Naive thymus-derived CD8-positive, alpha-beta T cell (primary cell): ENCODE measurements at regions of chr11 and their contacts with region 1.

Region 1: GRCh38 chr11:62787005-62787759 is at the start of gene TMEM179B:
- DNase-seq: peak; percentile 90 to 99 (median 97)
- ATAC-seq: peak; percentile 69 to 73
- H3K4me3 Mint-ChIP-seq: peak within 1 kb of the TSS; percentile 90 to 96 (median 96)
- H3K27ac Mint-ChIP-seq: peak within 1 kb of the TSS; percentile 92 to 98 (median 96)
- H3K4me1 Mint-ChIP-seq: peaks cover 14 to 53% (median 46%) of the 10 kb centered on the region in 4 donors
- H3K27me3 Mint-ChIP-seq: no peaks in the 10 kb centered on the region
- polyA plus RNA-seq, gene TMEM179B: 109 to 126 (median 122) TPM

Region 2: DNA sequence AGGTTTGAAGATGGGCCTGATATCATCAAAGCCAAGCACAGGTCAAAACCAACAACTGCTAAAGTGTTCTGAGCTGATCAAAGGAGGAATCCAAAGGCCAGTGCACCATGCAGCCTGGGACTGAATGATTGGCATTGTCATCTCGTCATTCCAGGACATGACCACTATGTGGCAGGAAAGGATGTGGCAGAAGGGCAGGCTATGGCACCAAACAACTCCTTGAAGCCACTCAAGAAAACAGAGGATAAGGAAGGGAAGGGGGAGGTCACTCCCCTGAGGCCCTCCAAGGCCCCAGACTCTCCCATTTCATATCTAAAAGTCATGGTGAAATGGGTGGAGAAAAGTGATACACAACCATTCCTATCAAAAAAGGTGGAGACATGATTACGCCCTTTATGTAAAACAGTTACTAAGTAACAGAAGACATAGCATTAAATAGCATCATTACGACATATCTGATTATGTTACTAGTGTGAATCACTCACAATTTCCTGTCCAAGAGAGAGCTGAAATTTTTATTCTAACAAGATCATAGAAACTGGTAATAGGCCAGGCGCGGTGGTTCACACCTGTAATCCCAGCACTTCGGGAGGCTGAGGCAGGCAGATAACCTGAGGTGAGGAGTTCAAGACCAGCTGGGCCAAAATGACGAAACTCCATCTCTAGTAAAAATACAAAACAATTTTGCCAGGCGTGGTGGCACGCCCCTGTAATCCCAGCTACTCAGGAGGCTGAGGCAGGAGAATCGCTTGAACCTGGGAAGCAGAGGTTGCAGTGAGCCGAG is 289.9 kb before region 1 on chr11:
- POLR2A ChIA-PET with region 1: no interaction called
- DNase-seq: peak in 2 of 10 donors; percentile 8 to 9
- ATAC-seq: peak; percentile 20 to 52
- H3K4me3 Mint-ChIP-seq: no peak overlapping the region
- H3K27ac Mint-ChIP-seq: peak overlapping the region in 2 of 10 donors; percentile 3 to 14
- H3K4me1 Mint-ChIP-seq: peaks cover 0 to 11% (median 1%) of the 10 kb centered on the region in 4 donors
- H3K27me3 Mint-ChIP-seq: peaks cover under 1 to 9% (median 7%) of the 10 kb centered on the region in 5 donors

Region 3: GRCh38 chr11:62771144-62772021 is 15.8 kb before region 1 on chr11 and contains the start of gene TAF6L:
- POLR2A ChIA-PET with region 1: interaction called, 46 read pairs
- DNase-seq: peak; percentile 78 to 93 (median 83)
- ATAC-seq: peak; percentile 82 to 94
- H3K4me3 Mint-ChIP-seq: peak within 1 kb of the TSS; percentile 84 to 99 (median 96)
- H3K27ac Mint-ChIP-seq: peak within 1 kb of the TSS; percentile 89 to 98 (median 96)
- H3K4me1 Mint-ChIP-seq: peaks cover 15 to 34% (median 32%) of the 10 kb centered on the region in 4 donors
- H3K27me3 Mint-ChIP-seq: no peaks in the 10 kb centered on the region
- polyA plus RNA-seq, gene TAF6L: 8.7 to 10.8 (median 8.9) TPM

Region 4: GRCh38 chr11:62805076-62805892 is 18.1 kb after region 1 on chr11 and contains the start of gene NXF1:
- POLR2A ChIA-PET with region 1: interaction called, 48 read pairs
- DNase-seq: peak; percentile 90 to 98 (median 97)
- ATAC-seq: peak; percentile 85 to 86
- H3K4me3 Mint-ChIP-seq: peak within 1 kb of the TSS; percentile 93 to 100 (median 99)
- H3K27ac Mint-ChIP-seq: peak within 1 kb of the TSS; percentile 94 to 100 (median 98)
- H3K4me1 Mint-ChIP-seq: peaks cover 11 to 40% (median 29%) of the 10 kb centered on the region in 4 donors
- H3K27me3 Mint-ChIP-seq: no peaks in the 10 kb centered on the region
- polyA plus RNA-seq, gene NXF1: 38.4 to 82.9 (median 62.8) TPM

Region 5: DNA sequence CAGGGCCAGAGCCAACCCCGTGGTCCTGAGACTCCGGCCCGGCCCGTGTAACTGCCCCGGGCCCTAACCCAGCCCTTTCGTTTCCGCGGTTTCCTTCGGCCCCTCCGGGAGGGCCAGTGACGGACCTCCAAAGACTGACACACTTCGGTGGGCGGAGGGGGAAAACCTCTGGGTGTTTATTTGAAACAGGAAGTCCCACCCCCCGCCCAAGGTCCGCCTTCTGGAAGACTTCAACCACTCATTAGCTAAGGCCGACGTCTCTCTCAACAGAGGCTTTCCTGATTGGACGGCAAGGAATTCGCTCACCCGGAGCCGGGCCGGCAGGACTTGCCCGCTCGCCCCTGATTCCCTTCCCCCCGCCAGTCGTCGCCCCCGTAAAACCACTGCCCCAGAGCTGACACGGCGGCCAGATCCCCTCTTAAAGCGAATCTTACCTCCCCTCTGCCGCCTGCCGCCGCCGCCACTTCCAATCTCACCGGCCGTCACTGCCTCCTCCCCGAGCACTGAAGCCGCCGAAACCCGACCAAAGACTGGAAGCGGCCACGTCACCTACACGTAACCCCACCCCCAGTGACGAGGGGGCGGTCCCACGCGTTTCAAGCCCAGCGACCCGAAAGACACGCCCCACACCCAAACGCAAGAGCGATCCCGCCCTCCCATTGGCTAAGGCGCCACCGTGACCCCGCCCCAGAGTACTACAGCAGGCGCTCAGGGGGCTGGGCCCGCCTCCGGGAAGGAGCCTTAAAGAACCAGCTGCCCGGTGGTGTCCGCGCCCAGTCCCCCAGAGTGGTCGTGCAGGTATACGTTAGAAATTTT is 44.5 kb after region 1 on chr11 and contains the start of gene STX5:
- POLR2A ChIA-PET with region 1: interaction called, 22 read pairs
- DNase-seq: peak; percentile 99 to 100 (median 100)
- ATAC-seq: peak; percentile 89 to 90
- H3K4me3 Mint-ChIP-seq: peak within 1 kb of the TSS; percentile 93 to 99 (median 98)
- H3K27ac Mint-ChIP-seq: peak within 1 kb of the TSS; percentile 91 to 100 (median 100)
- H3K4me1 Mint-ChIP-seq: peaks cover 25 to 56% (median 48%) of the 10 kb centered on the region in 4 donors
- H3K27me3 Mint-ChIP-seq: no peaks in the 10 kb centered on the region
- polyA plus RNA-seq, gene STX5: 25.4 to 30.4 (median 26.2) TPM

Region 6: DNA sequence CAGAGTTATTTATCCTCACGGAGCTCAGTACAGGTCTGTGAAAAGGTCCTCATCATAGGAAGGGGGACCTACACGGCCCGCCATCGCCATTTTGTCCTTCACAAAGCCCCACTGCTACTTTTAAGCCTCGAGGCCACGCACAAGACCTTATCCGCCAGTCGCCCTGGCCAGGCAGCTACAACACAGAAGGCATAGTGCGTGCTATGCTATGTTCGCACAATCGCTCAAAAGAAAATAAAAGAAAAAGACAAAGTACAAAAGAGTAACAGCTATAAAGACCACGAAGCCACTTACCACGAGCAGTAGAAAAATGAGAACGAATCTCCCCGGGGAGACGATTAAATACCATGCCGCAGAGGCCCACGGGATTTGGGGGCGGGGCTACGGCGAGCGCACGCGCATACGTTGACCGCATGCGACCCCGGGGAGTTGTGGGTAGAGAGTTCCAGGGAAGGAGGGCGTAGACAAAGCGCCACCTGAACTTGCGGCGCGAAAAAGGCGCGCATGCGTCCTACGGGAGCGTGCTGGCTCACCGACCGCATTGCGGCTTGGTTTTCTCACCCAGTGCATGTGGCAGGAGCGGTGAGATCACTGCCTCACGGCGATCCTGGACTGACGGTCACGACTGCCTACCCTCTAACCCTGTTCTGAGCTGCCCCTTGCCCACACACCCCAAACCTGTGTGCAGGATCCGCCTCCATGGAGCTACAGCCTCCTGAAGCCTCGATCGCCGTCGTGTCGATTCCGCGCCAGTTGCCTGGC is 68.6 kb after region 1 on chr11:
- POLR2A ChIA-PET with region 1: interaction called, 128 read pairs
- DNase-seq: peak; percentile 94 to 99 (median 98)
- ATAC-seq: peak; percentile 87 to 90
- H3K4me3 Mint-ChIP-seq: peak overlapping the region; percentile 95 to 99 (median 98)
- H3K27ac Mint-ChIP-seq: peak overlapping the region; percentile 88 to 99 (median 98)
- H3K4me1 Mint-ChIP-seq: peaks cover 33 to 54% (median 52%) of the 10 kb centered on the region in 4 donors
- H3K27me3 Mint-ChIP-seq: peaks cover 0 to 4% (median 0%) of the 10 kb centered on the region in 5 donors

Region 7: GRCh38 chr11:62860835-62861563 is 73.8 kb after region 1 on chr11:
- POLR2A ChIA-PET with region 1: interaction called, 128 read pairs
- DNase-seq: no peak
- ATAC-seq: no peak
- H3K4me3 Mint-ChIP-seq: no peak overlapping the region
- H3K27ac Mint-ChIP-seq: peak overlapping the region in 1 of 10 donors; percentile 34
- H3K4me1 Mint-ChIP-seq: peaks cover 8 to 26% (median 14%) of the 10 kb centered on the region in 4 donors
- H3K27me3 Mint-ChIP-seq: peaks cover 0 to under 1% (median 0%) of the 10 kb centered on the region in 5 donors